Body of pancreas (tissue), 4 donors: ENCODE measurements at regions of chr13 and their contacts with region 1.

Region 1: DNA sequence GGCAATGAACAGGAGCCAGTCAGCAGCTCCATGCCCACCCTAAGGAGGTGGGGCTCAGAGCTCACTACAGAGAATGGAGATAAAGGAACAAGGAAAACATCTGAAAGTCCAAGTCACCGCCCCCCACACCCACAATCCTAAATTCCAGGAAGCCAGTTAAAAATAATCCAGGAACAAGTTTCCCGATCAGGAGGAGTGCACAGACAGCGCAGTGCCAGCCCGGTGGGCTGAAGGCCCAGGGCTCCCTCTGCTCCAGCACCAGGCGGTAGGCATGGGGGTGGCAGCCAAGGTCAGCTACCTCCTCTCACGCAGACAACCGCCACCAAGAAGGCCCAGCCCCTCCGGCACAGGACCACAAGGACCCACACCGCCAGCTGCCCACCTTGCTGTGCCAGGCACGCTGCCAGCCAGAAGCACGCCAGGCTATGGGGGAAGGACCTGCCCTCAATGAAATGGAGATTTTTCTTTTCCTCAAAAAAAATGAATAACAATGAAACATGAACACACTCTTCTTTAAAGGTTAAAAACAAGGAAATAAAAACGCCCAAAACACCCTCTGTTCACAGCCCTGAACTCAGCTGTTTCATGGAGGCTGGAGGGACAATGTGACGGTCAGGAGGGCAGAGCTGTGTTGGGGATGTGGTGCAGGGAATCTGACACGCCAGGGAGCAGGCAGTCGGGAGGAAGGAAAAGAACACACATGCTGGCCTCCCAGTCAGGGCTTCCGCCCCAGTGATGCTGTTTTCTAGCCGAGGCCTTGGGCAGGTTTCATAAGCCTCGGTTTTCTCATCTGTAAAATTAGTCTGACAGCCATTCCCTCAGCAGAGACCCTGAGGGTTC is 11.0 kb downstream of the STK24 start:
- DNase-seq: peak in 3 of 4 donors; percentile 34 to 54 (median 49)
- ATAC-seq: peak; percentile 74
- H3K4me3 ChIP-seq: no peak overlapping the region
- H3K27ac ChIP-seq: peak overlapping the region; percentile 51 to 86 (median 77)
- H3K4me1 ChIP-seq: peaks cover 58% of the 10 kb centered on the region
- H3K27me3 ChIP-seq: no peaks in the 10 kb centered on the region
- CTCF ChIP-seq: peak in 1 of 7 experiments; percentile 24
- POLR2A ChIP-seq: peak in 2 of 3 donors; percentile 34 to 52

Region 2: GRCh38 chr13:98495627-98496478 is 70.1 kb before region 1 on chr13:
- intact Hi-C with region 1: loop called (anchors 10 kb)
- DNase-seq: no peak
- ATAC-seq: peak; percentile 43
- H3K4me3 ChIP-seq: no peak overlapping the region
- H3K27ac ChIP-seq: peak overlapping the region in 3 of 4 donors; percentile 6 to 39 (median 6)
- H3K4me1 ChIP-seq: peaks cover 20% of the 10 kb centered on the region
- H3K27me3 ChIP-seq: no peaks in the 10 kb centered on the region
- CTCF ChIP-seq: no peak
- POLR2A ChIP-seq: no peak